Heart right ventricle (tissue), 16 donors: ENCODE measurements at regions of chr1 and their contacts with region 1.

Region 1: DNA sequence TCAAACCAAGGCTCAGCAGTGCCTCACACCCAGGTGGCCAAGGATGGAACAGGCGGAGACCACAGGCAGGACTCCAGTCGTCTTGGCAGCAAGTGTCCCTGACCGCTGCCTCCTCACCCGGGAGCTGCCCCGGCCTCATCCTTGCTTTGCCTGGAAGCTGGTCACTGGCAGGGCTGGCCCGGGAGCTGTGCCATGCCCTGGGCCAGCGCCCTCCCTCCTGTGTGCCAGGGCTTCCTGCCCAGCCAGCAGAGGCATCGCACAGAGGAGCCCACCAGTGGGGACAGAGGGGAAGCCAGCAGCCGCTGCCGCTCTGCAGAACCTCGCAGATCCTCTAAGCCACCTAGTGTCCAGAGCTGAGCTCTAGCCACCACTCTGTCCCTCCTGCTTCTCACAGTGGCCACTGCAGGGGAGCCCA is 7.8 kb downstream of the CASZ1 start:
- DNase-seq: peak; percentile 70 to 73
- ATAC-seq: peak; percentile 88 to 95 (median 94)
- H3K4me3 ChIP-seq: peak overlapping the region in 4 of 10 donors; percentile 4 to 42 (median 20)
- H3K27ac ChIP-seq: peak overlapping the region in 7 of 10 donors; percentile 26 to 64 (median 58)
- H3K4me1 ChIP-seq: peaks cover 10 to 95% (median 49%) of the 10 kb centered on the region in 9 donors
- H3K27me3 ChIP-seq: peaks cover 0 to 60% (median 9%) of the 10 kb centered on the region in 7 donors
- CTCF ChIP-seq: peak; percentile 35 to 75 (median 53)

Region 2: GRCh38 chr1:9737057-9737456 is 1051.5 kb before region 1 on chr1:
- intact Hi-C with region 1: no loop called
- DNase-seq: no peak
- ATAC-seq: peak in 2 of 8 donors; percentile 30
- H3K4me3 ChIP-seq: no peak overlapping the region
- H3K27ac ChIP-seq: no peak overlapping the region
- H3K4me1 ChIP-seq: no peaks in the 10 kb centered on the region
- H3K27me3 ChIP-seq: no peaks in the 10 kb centered on the region
- CTCF ChIP-seq: no peak

Region 3: DNA sequence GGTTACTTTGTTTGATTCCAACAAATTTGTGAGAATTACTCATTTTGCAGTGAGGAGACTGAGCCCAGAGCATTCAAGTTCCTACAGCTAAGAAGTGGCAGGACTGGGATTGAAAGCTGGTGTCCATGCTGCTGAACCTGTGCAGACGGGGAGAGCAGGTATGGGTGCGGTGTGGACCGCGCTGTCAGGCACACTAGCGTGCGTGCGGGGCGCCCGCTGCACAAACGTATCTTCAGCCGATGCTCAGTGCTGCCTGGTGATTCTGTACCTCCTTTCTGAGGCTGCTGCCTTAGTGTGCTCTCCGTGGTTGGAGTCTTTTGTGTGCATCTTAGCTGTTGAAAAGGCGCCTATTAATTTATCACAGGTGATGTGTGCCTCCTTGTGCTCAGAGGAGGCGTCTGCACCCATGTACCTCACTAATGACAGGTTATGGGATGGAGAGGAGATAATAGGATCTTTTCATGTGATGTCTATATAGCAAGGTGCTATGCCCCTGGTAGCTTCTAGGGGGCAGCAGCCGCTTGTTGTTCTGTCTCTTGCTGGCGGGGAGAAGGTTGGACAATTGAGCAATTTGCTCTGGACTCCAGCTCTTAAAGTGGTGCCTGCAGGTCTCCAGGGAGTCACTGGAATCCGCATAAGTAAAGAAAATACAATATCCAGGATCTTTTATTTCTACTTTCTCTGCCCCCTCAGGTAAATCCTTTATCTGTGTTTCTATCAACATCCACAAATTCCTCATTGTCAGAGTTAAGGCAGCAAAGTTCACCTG is 281.3 kb before region 1 on chr1:
- intact Hi-C with region 1: loop called in 2 of 10 experiments (anchors 10 kb)
- DNase-seq: peak; percentile 49 to 54
- ATAC-seq: peak; percentile 41 to 88 (median 84)
- H3K4me3 ChIP-seq: no peak overlapping the region
- H3K27ac ChIP-seq: no peak overlapping the region
- H3K4me1 ChIP-seq: peaks cover 0 to 41% (median 26%) of the 10 kb centered on the region in 9 donors
- H3K27me3 ChIP-seq: no peaks in the 10 kb centered on the region
- CTCF ChIP-seq: peak; percentile 65 to 88 (median 82)

Region 4: DNA sequence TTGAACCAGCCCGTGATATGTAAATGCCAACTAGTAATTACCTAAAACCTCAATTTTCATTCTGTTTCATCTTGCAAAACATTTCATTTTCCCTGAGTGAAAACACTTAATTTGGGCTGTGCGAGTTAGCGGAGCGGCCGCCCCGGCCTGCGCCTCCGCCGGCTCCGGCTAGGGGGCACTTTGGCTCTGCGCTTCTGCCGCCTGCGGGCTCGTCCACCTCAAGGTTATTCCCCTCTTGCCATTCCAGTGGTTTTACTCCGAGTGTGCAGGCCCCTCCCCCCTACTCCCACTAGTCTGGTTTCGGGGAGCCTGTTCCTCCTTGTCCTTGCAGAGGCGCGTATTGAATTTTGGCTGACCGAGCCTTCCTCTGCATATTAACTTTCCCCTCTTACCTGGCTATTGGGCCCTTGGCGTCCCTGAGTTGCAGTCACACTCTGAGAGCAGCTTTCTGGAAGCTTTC is 258.3 kb before region 1 on chr1:
- intact Hi-C with region 1: loop called in 3 of 10 experiments (anchors 2 to 10 kb)
- DNase-seq: peak in 1 of 2 donors; percentile 40
- ATAC-seq: peak; percentile 43 to 68 (median 54)
- H3K4me3 ChIP-seq: peak overlapping the region in 1 of 10 donors; percentile 4
- H3K27ac ChIP-seq: peak overlapping the region in 2 of 10 donors; percentile 3 to 77
- H3K4me1 ChIP-seq: peaks cover 18 to 54% (median 33%) of the 10 kb centered on the region in 9 donors
- H3K27me3 ChIP-seq: no peaks in the 10 kb centered on the region
- CTCF ChIP-seq: peak; percentile 52 to 81 (median 67)

Region 5: GRCh38 chr1:10694633-10695627 is 93.7 kb before region 1 on chr1:
- intact Hi-C with region 1: loop called in 8 of 10 experiments (anchors 5 to 10 kb)
- DNase-seq: peak; percentile 90 to 91
- ATAC-seq: peak; percentile 23 to 92 (median 77)
- H3K4me3 ChIP-seq: peak overlapping the region; percentile 21 to 62 (median 56)
- H3K27ac ChIP-seq: peak overlapping the region; percentile 75 to 92 (median 88)
- H3K4me1 ChIP-seq: peaks cover 16 to 66% (median 46%) of the 10 kb centered on the region in 9 donors
- H3K27me3 ChIP-seq: peaks cover 0 to 3% (median 0%) of the 10 kb centered on the region in 7 donors
- CTCF ChIP-seq: no peak

Region 6: DNA sequence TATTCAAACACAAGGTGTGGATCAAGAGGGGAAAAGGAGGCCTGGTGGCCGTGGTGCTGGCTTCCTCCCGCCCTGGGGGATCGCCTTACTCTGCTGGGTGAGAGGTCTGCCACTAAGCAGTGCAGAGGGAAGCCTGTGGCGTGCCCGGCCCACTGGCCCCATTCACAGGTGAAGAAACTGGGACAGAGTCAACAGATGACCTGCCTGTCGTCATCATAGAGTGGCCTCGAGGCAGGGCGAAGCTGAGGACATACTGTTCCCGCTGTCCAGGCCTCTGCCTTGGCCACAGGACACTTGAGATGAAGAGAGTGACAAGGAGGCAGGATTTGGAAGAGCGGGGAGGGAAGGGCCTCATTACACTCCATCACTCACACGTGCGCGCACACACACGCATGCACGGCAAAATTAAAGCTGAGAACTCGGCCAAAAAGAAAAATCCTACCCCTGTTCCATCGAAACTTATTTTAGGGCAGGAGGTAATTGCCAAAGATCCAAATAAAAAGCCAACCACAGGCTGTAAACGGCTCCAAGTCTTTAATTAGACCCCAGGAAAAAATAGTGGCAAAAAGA is 42.6 kb before region 1 on chr1:
- intact Hi-C with region 1: loop called in 3 of 10 experiments (anchors 5 kb)
- DNase-seq: no peak
- ATAC-seq: peak; percentile 25 to 87 (median 65)
- H3K4me3 ChIP-seq: no peak overlapping the region
- H3K27ac ChIP-seq: peak overlapping the region in 7 of 10 donors; percentile 39 to 72 (median 57)
- H3K4me1 ChIP-seq: peaks cover 0 to 64% (median 27%) of the 10 kb centered on the region in 9 donors
- H3K27me3 ChIP-seq: peaks cover 0 to 4% (median 0%) of the 10 kb centered on the region in 7 donors
- CTCF ChIP-seq: no peak

Region 7: DNA sequence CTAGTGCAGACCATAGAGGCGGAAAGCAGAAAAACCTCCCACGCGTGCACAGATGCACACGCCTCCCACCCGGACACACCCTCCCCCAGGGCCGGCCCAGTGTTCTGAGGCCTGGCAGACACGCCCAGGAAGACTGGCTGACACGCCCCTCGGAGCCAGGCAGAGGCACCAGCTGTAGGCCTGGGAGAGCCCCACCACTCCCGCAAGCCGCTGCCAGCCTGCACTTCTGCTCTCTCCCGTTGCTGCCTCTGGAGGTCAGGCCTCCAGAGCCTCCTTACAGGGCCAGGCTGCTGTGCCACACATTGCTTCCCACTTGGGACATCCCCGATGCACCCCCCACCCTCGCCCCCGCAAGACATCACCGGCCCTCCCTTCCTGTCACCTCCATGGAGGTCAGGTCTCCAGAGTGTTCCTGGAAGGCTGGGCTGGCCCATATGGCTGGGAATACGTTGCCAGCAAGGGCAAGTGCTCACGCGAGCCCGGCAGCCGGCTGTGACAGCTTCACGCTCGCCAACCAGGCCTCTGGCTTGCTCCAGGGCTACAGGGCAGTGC is 32.6 kb before region 1 on chr1:
- intact Hi-C with region 1: loop called in 2 of 10 experiments (anchors 5 kb)
- DNase-seq: peak; percentile 71 to 74
- ATAC-seq: peak; percentile 82 to 92 (median 88)
- H3K4me3 ChIP-seq: peak overlapping the region in 1 of 10 donors; percentile 16
- H3K27ac ChIP-seq: peak overlapping the region in 9 of 10 donors; percentile 1 to 81 (median 65)
- H3K4me1 ChIP-seq: peaks cover 14 to 72% (median 59%) of the 10 kb centered on the region in 9 donors
- H3K27me3 ChIP-seq: no peaks in the 10 kb centered on the region
- CTCF ChIP-seq: no peak

Region 8: DNA sequence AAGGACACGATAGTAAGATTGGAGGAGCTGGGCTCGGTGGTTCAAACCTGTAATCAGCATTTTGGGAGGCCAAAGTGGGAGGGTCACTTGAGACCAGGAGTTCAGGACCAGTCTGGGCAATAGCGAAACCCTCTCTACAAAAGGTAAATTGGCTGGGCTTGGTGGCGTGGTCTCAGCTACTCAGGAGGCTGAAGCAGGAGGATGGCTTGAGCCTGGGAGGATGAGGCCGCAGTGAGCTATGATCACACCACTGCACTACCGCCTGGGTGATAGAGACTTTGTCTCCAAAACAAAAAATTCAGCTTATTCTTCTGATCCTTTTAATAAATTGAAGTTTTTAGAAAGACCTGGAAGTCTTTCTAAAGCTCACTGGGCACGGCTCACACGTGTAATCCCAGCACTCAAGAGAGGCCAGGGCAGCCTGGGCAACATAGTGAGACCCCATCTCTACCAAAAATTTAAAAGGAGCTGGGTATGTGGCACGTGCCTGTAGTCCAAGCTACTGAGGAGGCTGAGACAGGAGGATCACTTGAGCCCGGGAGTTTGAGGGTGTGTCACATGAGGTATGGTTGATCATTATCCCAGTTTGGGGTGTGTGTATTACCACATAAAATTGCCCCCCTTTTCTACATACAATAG is 243.1 kb after region 1 on chr1:
- intact Hi-C with region 1: no loop called
- DNase-seq: no peak
- ATAC-seq: no peak
- H3K4me3 ChIP-seq: no peak overlapping the region
- H3K27ac ChIP-seq: no peak overlapping the region
- H3K4me1 ChIP-seq: no peaks in the 10 kb centered on the region
- H3K27me3 ChIP-seq: no peaks in the 10 kb centered on the region
- CTCF ChIP-seq: no peak